ENCODE measurements at regions of chr2 and their contacts with region 1.

Region 1: GRCh38 chr2:15939854-15940660 is at the start of gene MYCN:
- DNase-seq: peak; percentile 86 to 92 (median 92)
- H3K4me3 ChIP-seq: peak within 1 kb of the TSS; percentile 82 to 99 (median 95)
- H3K27ac ChIP-seq: peak within 1 kb of the TSS; percentile 43 to 50
- H3K4me1 ChIP-seq: peaks cover 11 to 35% (median 25%) of the 10 kb centered on the region in 4 experiments
- H3K27me3 ChIP-seq: peaks cover 0 to 2% (median 0%) of the 10 kb centered on the region in 5 experiments

Region 2: GRCh38 chr2:16281451-16282336 is 341.6 kb after region 1 on chr2:
- CTCF ChIA-PET with region 1: interaction called, 26 read pairs
- POLR2A ChIA-PET with region 1: no interaction called
- DNase-seq: peak; percentile 59 to 72 (median 71)
- H3K4me3 ChIP-seq: peak overlapping the region in 3 of 7 experiments; percentile 9 to 54 (median 27)
- H3K27ac ChIP-seq: no peak overlapping the region
- H3K4me1 ChIP-seq: peaks cover 0 to 29% (median 21%) of the 10 kb centered on the region in 4 experiments
- H3K27me3 ChIP-seq: no peaks in the 10 kb centered on the region

Region 3: DNA sequence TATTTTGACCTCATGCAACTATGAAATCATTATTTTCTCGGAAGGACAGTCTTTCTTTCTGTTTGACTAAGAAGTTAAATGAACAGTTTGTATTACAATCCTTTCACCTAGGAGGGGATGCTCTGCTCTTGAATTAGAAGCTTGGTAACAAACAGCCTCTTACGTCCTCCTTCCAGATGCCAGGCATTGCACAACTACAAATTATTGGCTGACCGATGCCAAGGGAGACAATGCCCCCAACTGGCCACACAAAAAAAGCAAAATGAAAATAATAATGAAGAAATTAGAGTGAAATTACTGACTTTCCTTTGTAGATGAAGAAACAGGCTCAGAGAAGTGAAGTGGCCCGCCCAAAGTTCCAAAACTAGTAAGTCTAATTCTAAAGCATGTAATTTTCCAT is 547.6 kb after region 1 on chr2:
- CTCF ChIA-PET with region 1: interaction called, 33 read pairs
- POLR2A ChIA-PET with region 1: interaction called, 3 read pairs
- DNase-seq: peak; percentile 81 to 87 (median 85)
- H3K4me3 ChIP-seq: no peak overlapping the region
- H3K27ac ChIP-seq: peak overlapping the region in 1 of 2 experiments; percentile 17
- H3K4me1 ChIP-seq: peaks cover 17 to 59% (median 44%) of the 10 kb centered on the region in 4 experiments
- H3K27me3 ChIP-seq: no peaks in the 10 kb centered on the region

Region 4: DNA sequence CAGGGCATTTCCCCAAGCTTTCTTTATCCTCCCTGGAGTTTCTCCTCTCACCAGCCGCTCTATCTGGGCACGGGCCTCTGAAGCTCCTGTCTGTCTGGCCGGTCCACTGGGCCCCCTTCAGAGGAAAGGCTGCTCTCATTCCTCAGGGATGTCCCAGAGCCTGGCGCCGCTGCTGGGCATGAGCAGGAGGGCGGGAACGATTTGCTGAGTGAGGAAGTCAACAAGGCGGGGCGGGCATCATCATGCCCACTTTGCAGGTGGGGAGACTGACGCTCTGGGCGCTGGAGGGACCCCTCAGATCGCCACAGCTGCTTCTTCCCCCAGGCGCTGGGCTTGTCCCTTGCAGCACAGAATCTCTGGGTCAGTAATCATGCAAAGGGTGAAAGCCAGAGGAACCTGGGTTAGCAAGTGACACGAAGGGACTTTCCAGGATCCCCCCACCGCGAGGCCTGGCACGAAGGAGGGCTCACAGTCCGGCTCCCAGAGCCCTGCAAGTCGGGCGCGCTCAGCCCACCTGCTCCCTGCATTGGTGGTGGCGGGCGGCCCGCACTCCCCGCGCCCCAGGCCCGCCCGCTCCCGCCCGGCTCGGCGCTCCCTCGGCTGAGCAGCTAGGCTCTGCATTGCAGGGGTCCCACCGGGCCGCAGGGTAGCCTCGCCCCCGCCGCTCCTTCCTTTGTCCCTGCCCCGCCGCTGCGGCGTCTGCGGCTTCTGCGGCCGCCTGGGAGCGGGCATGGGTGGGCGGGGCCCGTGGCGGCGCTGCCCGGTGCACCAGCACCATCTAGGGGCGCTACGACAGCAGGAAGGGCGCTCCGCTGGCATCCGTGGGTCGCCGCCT is 567.8 kb after region 1 on chr2:
- CTCF ChIA-PET with region 1: interaction called, 80 read pairs
- POLR2A ChIA-PET with region 1: interaction called, 6 read pairs
- DNase-seq: peak; percentile 58 to 83 (median 83)
- H3K4me3 ChIP-seq: peak overlapping the region in 5 of 7 experiments; percentile 32 to 68 (median 43)
- H3K27ac ChIP-seq: no peak overlapping the region
- H3K4me1 ChIP-seq: peaks cover 2 to 16% (median 13%) of the 10 kb centered on the region in 4 experiments
- H3K27me3 ChIP-seq: peaks cover 0 to 2% (median 0%) of the 10 kb centered on the region in 5 experiments

Measured in common myeloid progenitor, CD34-positive (primary cell).